ENCODE measurements at regions of chr11 and their contacts with region 1.

Region 1: DNA sequence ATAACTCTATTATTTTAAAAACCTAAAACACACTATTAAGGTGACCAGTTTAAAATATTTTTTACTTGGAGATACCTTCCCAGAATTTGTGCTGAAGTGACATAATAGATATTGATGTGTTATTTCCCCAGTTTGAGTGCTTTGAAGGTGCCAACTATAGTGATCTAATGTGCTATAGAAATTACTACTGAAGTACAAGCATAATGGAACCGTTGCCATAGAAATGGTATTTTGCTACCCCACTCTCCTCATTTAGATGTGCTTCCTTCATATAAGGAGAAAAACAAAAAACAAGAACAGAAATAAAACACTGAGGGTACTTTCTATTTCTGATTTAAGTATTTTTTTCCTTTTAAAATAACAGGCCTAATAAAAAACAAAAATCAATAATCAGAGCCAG is 19.2 kb downstream of the DDI1 start:
- DNase-seq: no peak
- H3K4me3 ChIP-seq: no peak overlapping the region
- H3K27ac ChIP-seq: no peak overlapping the region
- H3K4me1 ChIP-seq: no peaks in the 10 kb centered on the region
- H3K27me3 ChIP-seq: no peaks in the 10 kb centered on the region
- CTCF ChIP-seq: no peak
- POLR2A ChIP-seq: no peak

Region 2: GRCh38 chr11:104776493-104777170 is 721.0 kb after region 1 on chr11:
- intact Hi-C with region 1: no loop called
- DNase-seq: no peak
- H3K4me3 ChIP-seq: no peak overlapping the region
- H3K27ac ChIP-seq: peak overlapping the region; percentile 19 to 33
- H3K4me1 ChIP-seq: peaks cover 0 to 3% of the 10 kb centered on the region in 2 donors
- H3K27me3 ChIP-seq: no peaks in the 10 kb centered on the region
- CTCF ChIP-seq: no peak
- POLR2A ChIP-seq: no peak

Region 3: GRCh38 chr11:105754716-105755115 is 1699.1 kb after region 1 on chr11:
- intact Hi-C with region 1: loop called (anchors 5 kb)
- DNase-seq: no peak
- H3K4me3 ChIP-seq: no peak overlapping the region
- H3K27ac ChIP-seq: no peak overlapping the region
- H3K4me1 ChIP-seq: no peaks in the 10 kb centered on the region
- H3K27me3 ChIP-seq: no peaks in the 10 kb centered on the region
- CTCF ChIP-seq: no peak
- POLR2A ChIP-seq: no peak